ENCODE measurements at regions of chr7 and their contacts with region 1.

Region 1: DNA sequence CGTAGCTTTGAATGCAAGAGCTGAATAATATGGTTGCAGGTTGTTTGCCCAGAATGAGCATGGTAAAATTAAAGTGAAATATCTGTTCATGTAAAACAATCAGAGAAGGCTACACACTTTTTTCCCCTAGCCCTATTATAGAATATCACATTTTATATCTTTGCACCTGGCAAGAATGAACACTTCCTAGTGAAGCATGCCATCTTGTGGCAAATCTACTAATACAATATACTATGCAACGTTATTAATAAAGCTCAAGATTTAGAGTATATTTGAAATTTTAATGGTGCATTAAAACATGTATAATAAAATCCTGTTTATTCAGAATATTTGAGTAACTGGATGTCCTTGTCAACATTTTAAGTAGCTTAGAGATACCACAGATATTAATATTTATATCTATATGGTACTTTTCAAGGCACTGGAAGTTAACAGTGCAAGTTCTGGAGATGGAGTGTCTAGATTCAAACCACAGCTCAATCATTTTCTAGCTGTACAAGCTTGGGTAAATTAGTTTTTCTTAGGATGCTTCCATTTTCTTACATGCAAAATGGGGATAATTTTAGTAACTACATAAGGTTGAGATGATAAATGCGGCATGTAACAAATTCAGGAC is 643.1 kb upstream of the SEMA3D start:
- DNase-seq: peak in 1 of 2 experiments; percentile 27
- ATAC-seq: peak; percentile 74 to 79; a peak in 4 of 6 replicates
- H3K4me3 ChIP-seq: no peak overlapping the region
- H3K27ac ChIP-seq: no peak overlapping the region
- H3K4me1 ChIP-seq: no peaks in the 10 kb centered on the region
- CTCF ChIP-seq: peak; percentile 78
- EP300 ChIP-seq: no peak
- POLR2A ChIP-seq: no peak
- RAD21 ChIP-seq: peak; percentile 84 to 87

Region 2: DNA sequence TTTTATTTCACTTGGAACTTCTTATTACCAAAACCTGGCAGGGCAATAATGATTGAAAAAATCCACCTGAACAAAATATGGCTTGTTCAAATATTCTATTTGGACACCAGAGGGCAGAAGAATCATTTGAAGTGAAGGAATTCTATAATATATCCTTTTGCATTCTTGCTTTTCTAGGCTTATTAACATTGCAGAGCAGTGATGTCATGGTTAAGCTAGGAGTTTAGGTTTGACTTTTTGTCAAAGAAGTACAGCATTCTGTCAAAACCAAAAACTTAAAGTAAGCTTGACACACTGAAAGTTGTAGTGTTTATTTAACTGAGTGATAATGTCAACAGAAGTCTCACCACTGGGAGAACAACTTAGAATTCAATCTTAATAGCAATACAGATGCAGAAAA is 799.0 kb before region 1 on chr7:
- CTCF ChIA-PET with region 1: interaction called, 21 read pairs
- POLR2A ChIA-PET with region 1: no interaction called
- DNase-seq: peak; percentile 1 to 28
- ATAC-seq: peak; percentile 34 to 62; a peak in 3 of 6 replicates
- H3K4me3 ChIP-seq: no peak overlapping the region
- H3K27ac ChIP-seq: no peak overlapping the region
- H3K4me1 ChIP-seq: no peaks in the 10 kb centered on the region
- CTCF ChIP-seq: peak; percentile 76
- EP300 ChIP-seq: no peak
- POLR2A ChIP-seq: no peak
- RAD21 ChIP-seq: peak; percentile 65 to 71

Region 3: GRCh38 chr7:85041605-85042216 is 788.2 kb before region 1 on chr7:
- CTCF ChIA-PET with region 1: interaction called, 98 read pairs
- POLR2A ChIA-PET with region 1: no interaction called
- DNase-seq: peak; percentile 17 to 73
- ATAC-seq: peak; percentile 89 to 93
- H3K4me3 ChIP-seq: no peak overlapping the region
- H3K27ac ChIP-seq: no peak overlapping the region
- H3K4me1 ChIP-seq: no peaks in the 10 kb centered on the region
- CTCF ChIP-seq: peak; percentile 87
- EP300 ChIP-seq: no peak
- POLR2A ChIP-seq: no peak
- RAD21 ChIP-seq: peak; percentile 89 to 90

Region 4: DNA sequence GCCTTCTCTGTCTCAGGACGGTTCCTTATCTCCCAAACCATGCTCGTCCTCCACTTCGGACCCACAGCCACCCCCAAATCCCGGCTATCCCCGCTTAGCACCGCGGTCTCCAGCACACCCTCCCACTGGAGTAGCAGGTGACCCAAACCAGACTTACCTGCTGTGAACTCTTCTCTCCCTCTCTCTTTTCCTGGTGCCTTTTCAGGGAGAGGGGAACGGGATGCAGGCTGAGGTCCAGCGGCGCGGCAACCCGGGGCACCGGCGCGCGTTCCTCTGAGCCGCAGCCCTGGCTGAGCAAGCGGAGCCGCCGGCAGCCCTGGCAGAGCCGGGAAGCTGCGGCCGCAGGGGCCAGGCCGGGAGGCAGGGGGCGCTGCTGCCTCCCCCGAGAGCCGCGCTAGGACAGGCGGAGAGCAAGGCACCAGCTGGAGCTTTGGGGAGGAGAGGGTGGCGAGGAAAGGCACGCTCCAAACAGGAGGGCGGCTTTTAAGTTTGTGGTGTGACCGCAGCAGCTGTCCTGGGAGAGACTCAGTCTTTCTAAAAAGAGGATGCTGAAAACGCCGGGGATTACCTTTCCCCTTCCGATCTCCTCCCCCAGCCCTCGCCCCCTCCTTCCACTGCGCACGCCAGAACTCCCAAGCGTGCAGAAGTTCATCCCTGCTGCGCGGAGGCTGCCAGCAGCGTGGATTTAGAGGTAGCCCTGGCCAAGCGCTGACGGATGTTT is 643.2 kb before region 1 on chr7 and contains the start of gene SEMA3D:
- CTCF ChIA-PET with region 1: interaction called, 10 read pairs
- POLR2A ChIA-PET with region 1: no interaction called
- DNase-seq: peak; percentile 60 to 75
- ATAC-seq: peak; percentile 96 to 99
- H3K4me3 ChIP-seq: peak within 1 kb of the TSS; percentile 52
- H3K27ac ChIP-seq: no peak within 1 kb of the TSS
- H3K4me1 ChIP-seq: 0 out of 3 replicates have a peak, but pooled peaks cover 3% of the 10 kb centered on the region
- CTCF ChIP-seq: peak; percentile 71
- EP300 ChIP-seq: no peak
- POLR2A ChIP-seq: no peak
- RAD21 ChIP-seq: peak; percentile 49 to 60; a peak in 3 of 5 replicates
- polyA plus RNA-seq, gene SEMA3D: 0.13 and 0.15 TPM in 2 replicates

Region 5: GRCh38 chr7:85719981-85720963 is 109.7 kb before region 1 on chr7:
- CTCF ChIA-PET with region 1: no interaction called
- POLR2A ChIA-PET with region 1: no interaction called
- DNase-seq: peak in 1 of 2 experiments; percentile 45
- ATAC-seq: peak; percentile 82 to 97
- H3K4me3 ChIP-seq: no peak overlapping the region
- H3K27ac ChIP-seq: peak overlapping the region; percentile 76 to 84
- H3K4me1 ChIP-seq: peaks cover 30% of the 10 kb centered on the region
- CTCF ChIP-seq: no peak
- EP300 ChIP-seq: peak; percentile 11 to 30; a peak in 1 of 5 replicates
- POLR2A ChIP-seq: no peak
- RAD21 ChIP-seq: no peak